ENCODE measurements at regions of chr14 and their contacts with region 1.

Region 1: GRCh38 chr14:67532998-67533753 is at the start of gene PLEKHH1:
- DNase-seq: peak in 7 of 9 experiments; percentile 11 to 66 (median 51)
- ATAC-seq: peak; percentile 80
- H3K4me3 ChIP-seq: peak within 1 kb of the TSS; percentile 24 to 53
- H3K4me3 Mint-ChIP-seq: peak within 1 kb of the TSS; percentile 80
- H3K27ac ChIP-seq: no peak within 1 kb of the TSS
- H3K27ac Mint-ChIP-seq: no peak within 1 kb of the TSS
- H3K4me1 ChIP-seq: peaks cover 5% of the 10 kb centered on the region
- H3K4me1 Mint-ChIP-seq: peaks cover 7% of the 10 kb centered on the region
- H3K27me3 ChIP-seq: no peaks in the 10 kb centered on the region
- H3K27me3 Mint-ChIP-seq: peaks cover 22% of the 10 kb centered on the region
- CTCF ChIP-seq: no peak
- total RNA-seq, gene PLEKHH1: 0.28 to 0.54 TPM

Region 2: DNA sequence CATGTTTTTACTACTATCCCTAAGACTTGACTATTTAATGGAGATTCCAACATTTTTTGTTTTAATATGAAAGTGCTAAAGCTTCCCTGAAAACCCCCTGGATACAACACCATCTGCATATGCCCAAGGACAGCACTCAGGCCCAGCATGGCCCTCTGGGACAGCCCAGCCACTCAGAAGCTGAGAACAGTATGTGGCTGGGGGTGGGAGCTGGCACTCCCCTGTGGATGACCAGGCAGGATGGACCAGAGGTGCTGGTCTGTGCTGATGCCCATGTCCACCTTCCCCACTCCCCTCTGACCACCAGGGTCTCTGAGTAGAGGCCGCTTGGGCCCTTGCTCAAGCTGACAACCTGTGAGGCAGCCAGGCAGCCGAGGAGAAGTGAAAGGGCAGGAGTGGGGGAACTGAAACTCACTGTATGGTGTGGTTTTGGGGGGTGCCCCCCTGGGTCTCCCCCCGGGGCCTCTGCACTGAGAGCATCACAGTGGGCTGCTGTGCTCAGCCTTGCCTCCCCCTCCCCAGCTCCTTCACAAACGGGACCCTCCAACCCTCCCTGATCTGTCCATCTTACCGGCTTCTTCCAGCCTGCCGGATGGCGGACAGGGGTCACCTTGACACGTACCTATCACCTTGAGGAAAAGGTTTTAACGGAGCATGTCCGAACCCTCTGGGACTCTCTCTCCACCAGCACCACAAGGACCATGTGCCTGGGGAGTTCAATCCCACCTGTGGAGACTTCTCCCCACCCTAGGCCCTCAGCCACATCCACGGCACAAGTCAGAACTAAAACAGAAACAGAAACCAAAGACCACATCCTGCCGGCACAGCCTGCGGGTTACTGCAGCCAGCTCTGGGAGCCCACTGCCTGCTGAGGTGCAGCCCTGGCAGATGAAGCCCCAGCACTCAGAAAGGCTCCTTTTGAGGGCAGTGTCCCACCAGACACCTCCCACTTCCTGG is 45.0 kb before region 1 on chr14 and contains the start of gene TMEM229B:
- CTCF ChIA-PET with region 1: interaction called, 4 read pairs
- POLR2A ChIA-PET with region 1: no interaction called
- intact Hi-C with region 1: loop called in 1 of 2 experiments (anchors 5 kb)
- DNase-seq: peak; percentile 43 to 90 (median 77)
- ATAC-seq: peak; percentile 96
- H3K4me3 ChIP-seq: peak within 1 kb of the TSS; percentile 68 to 84
- H3K4me3 Mint-ChIP-seq: peak within 1 kb of the TSS; percentile 99
- H3K27ac ChIP-seq: peak within 1 kb of the TSS; percentile 92 to 93
- H3K27ac Mint-ChIP-seq: peak within 1 kb of the TSS; percentile 100
- H3K4me1 ChIP-seq: peaks cover 51% of the 10 kb centered on the region
- H3K4me1 Mint-ChIP-seq: peaks cover 79% of the 10 kb centered on the region
- H3K27me3 ChIP-seq: no peaks in the 10 kb centered on the region
- H3K27me3 Mint-ChIP-seq: no peaks in the 10 kb centered on the region
- CTCF ChIP-seq: no peak
- total RNA-seq, gene TMEM229B: 4.5 to 4.8 TPM

Region 3: GRCh38 chr14:68137704-68138619 is 604.8 kb after region 1 on chr14:
- CTCF ChIA-PET with region 1: no interaction called
- POLR2A ChIA-PET with region 1: no interaction called
- intact Hi-C with region 1: no loop called
- DNase-seq: no peak
- ATAC-seq: no peak
- H3K4me3 ChIP-seq: no peak overlapping the region
- H3K4me3 Mint-ChIP-seq: no peak overlapping the region
- H3K27ac ChIP-seq: no peak overlapping the region
- H3K27ac Mint-ChIP-seq: no peak overlapping the region
- H3K4me1 ChIP-seq: no peaks in the 10 kb centered on the region
- H3K4me1 Mint-ChIP-seq: peaks cover 2% of the 10 kb centered on the region
- H3K27me3 ChIP-seq: no peaks in the 10 kb centered on the region
- H3K27me3 Mint-ChIP-seq: no peaks in the 10 kb centered on the region
- CTCF ChIP-seq: no peak